Body of pancreas (tissue), 4 donors: ENCODE measurements at regions of chr16 and their contacts with region 1.

Region 1: DNA sequence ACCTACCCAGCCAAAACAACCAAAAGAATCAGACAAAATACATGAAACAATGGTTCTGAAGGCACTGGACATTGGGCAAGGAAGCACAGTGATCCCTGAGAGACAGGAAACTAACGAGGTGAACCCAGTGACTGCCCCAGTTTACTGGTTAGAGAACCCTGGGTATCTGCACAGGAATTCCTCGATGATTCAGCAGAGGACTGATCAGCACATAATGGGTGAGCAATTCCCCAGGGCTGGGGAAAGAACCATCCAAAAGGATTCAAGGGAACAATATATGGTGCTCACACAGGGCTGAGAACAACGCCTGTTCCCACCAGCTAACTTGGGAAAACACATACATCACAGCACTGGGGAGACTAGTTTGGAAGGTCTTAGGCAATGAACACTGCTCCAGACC is 167.2 kb downstream of the PARN start:
- DNase-seq: no peak
- ATAC-seq: no peak
- H3K4me3 ChIP-seq: no peak overlapping the region
- H3K27ac ChIP-seq: no peak overlapping the region
- H3K4me1 ChIP-seq: no peaks in the 10 kb centered on the region
- H3K27me3 ChIP-seq: no peaks in the 10 kb centered on the region
- CTCF ChIP-seq: no peak
- POLR2A ChIP-seq: no peak

Region 2: DNA sequence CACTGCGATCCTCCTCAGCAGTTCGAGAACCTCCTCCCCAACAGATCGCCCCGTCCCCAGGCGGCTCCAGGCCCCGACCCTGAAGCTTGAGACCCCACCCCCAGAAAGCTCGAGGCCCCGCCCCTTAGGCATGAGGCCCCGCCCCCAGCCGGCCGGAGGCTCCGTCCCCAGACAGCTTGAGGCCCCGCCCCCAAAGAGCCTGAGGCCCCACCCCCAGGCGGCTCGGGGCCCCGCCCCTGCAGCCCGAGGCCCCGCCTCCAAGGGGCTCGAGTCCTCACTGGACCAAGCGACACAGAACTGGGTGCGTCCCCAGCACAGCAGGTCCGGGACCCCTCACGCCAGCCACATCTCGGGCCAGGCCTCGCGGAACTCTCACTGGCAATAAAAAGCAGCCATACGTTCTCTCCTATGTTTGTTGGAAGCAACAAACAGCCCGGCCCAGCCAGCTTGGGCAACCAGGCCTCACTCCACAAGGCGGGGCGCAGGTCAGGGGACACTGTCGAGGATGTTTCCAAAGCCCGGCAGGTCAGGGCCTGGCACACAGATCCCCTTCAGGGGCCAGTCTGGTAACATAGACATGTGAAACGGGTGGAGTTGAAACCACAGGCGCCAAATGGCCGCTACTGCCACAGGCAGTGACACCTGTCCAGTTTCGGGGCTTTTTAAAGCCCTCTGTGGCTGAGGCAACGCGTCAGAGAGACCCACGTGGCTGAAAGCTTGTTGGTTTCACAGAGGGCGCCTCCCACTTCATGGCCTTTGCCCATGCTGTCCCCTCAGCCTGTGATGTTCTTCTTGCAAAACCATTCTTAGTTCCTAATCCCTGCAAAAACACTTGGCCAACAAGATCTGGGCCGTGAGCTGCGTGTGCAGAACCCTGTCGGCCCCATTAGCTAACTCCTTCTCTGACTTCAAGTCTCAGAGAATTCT is 56.9 kb before region 1 on chr16:
- intact Hi-C with region 1: loop called (anchors 10 kb)
- DNase-seq: no peak
- ATAC-seq: peak; percentile 27
- H3K4me3 ChIP-seq: no peak overlapping the region
- H3K27ac ChIP-seq: no peak overlapping the region
- H3K4me1 ChIP-seq: no peaks in the 10 kb centered on the region
- H3K27me3 ChIP-seq: no peaks in the 10 kb centered on the region
- CTCF ChIP-seq: no peak
- POLR2A ChIP-seq: no peak